ENCODE measurements at regions of chr3 and their contacts with region 1.

Region 1: DNA sequence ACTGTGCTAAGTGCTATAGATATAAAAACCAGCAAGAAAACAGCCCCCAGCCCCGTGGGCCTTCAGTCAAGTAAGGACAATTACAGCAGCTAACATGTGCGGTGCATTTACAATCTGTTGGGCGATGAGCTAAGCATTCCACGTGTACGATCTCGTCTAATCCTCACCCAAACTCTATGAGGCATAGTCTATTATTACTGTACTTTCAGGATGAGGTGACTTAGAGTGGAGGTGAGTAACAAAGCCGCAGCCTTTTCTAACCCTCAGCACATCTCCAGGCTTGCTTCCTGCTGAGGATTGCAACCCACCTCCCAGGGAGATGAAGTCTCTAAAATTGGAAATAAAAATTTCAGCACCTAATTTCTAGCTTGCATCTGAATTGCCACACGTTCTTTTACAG is 53.2 kb upstream of the MCF2L2 start:
- DNase-seq: no peak
- H3K4me3 Mint-ChIP-seq: no peak overlapping the region
- H3K27ac Mint-ChIP-seq: no peak overlapping the region
- H3K4me1 Mint-ChIP-seq: peaks cover 5% of the 10 kb centered on the region
- H3K27me3 Mint-ChIP-seq: peaks cover under 1% of the 10 kb centered on the region

Region 2: DNA sequence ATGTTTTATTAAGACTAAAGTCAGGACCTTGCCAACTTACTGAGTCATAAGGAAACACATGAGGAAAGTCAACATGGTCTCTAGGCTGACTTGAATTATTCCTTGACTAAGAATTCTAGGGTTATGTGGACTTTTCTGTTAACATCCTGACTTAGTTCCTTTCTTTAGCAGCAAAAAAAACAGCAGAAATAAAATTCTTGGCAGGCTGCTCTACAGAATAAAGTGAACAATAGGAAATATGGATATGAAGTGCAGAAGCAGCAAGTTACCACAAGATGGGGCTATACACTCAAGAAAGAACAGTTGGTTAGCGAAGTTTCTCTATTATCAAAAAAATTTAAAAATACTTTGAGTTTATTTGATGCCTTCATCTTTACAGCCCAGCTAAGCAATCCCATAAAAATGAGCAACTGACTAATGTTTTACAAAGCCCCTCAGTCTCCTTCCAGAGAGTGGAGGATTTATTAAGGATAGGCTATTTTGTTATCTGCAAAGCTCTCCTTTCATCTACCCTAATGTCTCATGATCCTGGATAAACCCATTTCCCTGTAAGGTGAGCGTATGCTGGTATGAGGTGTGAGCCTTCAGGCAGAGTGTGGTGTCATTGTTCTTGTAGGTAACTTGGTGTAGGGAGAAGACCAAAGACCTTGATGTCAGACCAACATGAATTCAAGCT is 359.2 kb before region 1 on chr3:
- intact Hi-C with region 1: no loop called
- DNase-seq: peak; percentile 68
- H3K4me3 Mint-ChIP-seq: no peak overlapping the region
- H3K27ac Mint-ChIP-seq: no peak overlapping the region
- H3K4me1 Mint-ChIP-seq: peaks cover 7% of the 10 kb centered on the region
- H3K27me3 Mint-ChIP-seq: peaks cover 4% of the 10 kb centered on the region

Region 3: DNA sequence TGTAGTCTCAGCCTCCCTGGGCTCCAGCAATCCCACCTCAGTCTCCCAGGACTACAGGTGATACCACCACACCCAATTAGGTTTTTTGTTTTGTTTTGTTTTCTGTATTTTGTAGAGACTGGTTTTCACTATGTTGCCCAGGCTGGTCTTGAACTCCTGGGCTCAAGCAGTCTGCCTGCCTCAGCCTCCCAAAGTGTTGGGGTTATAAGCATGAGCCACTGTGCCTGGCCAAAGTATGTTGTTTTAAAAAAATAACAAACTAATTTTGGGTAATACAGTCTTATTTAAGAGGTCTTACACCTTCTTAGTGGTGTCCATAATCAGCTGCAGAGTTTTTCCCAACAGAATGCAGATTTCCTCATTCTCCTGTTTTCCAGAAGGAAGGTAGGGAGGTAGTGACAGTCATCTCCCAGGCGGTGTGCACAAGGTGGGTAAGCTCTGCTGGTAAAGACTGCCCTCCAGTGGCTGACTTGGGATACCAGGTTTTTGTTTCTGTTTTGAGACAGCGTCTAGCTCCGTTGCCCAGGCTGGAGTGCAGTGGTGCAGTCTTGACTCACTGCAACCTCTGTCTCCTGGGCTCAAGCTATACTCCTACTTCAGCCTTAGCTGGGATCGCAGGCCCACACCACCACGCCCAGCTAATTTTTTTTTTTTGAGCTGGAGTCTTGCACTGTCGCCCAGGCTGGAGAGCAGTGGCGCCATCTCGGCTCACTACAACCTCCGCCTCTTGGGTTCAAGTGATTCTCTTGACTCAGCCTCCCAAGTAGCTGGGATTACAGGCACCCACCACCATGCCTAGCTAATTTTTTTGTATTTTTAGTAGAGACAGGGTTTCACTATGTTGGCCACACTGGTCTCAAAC is 285.4 kb after region 1 on chr3:
- intact Hi-C with region 1: loop called (anchors 2 kb)
- DNase-seq: peak; percentile 93
- H3K4me3 Mint-ChIP-seq: no peak overlapping the region
- H3K27ac Mint-ChIP-seq: peak overlapping the region; percentile 37
- H3K4me1 Mint-ChIP-seq: peaks cover 8% of the 10 kb centered on the region
- H3K27me3 Mint-ChIP-seq: no peaks in the 10 kb centered on the region

Region 4: GRCh38 chr3:183794452-183794851 is 312.9 kb after region 1 on chr3:
- intact Hi-C with region 1: no loop called
- DNase-seq: no peak
- H3K4me3 Mint-ChIP-seq: no peak overlapping the region
- H3K27ac Mint-ChIP-seq: peak overlapping the region; percentile 64
- H3K4me1 Mint-ChIP-seq: peaks cover 5% of the 10 kb centered on the region
- H3K27me3 Mint-ChIP-seq: no peaks in the 10 kb centered on the region

Measured in activated CD4-positive, alpha-beta T cell treated with anti-CD3 and anti-CD28 coated beads, Interleukin-2, amount 10 ng/mL, durations not matched to agents 24 days and 14 days (primary cell).